Natural killer cell (primary cell): ENCODE measurements at regions of chr12 and their contacts with region 1.

Region 1: DNA sequence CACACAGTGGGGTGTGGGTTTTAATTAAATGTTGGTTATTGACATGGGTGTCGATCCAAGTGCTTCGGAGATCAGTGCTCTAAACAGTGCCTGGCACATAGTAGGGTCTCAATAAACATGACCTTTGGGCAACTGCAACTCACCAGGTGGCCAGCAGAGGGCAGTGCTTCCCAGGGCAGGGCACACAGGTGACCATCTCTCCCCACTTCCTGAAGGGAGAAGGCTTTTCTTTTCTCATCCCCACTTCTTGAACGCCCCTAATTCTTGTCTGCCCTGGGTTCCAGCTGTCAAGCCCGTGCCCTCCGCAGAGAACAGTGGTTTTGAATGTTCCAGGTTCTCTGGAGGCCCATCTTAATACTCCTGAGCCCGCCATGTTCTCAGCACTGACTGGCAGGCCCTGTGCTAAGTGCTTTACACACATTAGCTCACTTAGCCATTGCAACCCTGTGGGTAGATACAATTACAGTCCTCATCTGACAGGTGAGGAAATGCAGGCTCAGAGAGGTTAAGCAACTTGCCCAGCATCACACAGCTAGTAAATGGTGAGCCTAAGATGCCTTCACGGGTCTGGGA is 16.3 kb downstream of the RAPGEF3 start:
- DNase-seq: peak; percentile 69 to 82
- ATAC-seq: peak; percentile 56 to 64 (median 57)
- H3K4me3 ChIP-seq: no peak overlapping the region
- H3K4me3 Mint-ChIP-seq: no peak overlapping the region
- H3K27ac ChIP-seq: no peak overlapping the region
- H3K27ac Mint-ChIP-seq: no peak overlapping the region
- H3K4me1 ChIP-seq: peaks cover 41% of the 10 kb centered on the region
- H3K4me1 Mint-ChIP-seq: peaks cover 17 to 38% of the 10 kb centered on the region in 2 donors
- H3K27me3 ChIP-seq: peaks cover 6% of the 10 kb centered on the region
- H3K27me3 Mint-ChIP-seq: peaks cover 18 to 19% of the 10 kb centered on the region in 2 donors
- CTCF ChIP-seq: peak; percentile 98

Region 2: DNA sequence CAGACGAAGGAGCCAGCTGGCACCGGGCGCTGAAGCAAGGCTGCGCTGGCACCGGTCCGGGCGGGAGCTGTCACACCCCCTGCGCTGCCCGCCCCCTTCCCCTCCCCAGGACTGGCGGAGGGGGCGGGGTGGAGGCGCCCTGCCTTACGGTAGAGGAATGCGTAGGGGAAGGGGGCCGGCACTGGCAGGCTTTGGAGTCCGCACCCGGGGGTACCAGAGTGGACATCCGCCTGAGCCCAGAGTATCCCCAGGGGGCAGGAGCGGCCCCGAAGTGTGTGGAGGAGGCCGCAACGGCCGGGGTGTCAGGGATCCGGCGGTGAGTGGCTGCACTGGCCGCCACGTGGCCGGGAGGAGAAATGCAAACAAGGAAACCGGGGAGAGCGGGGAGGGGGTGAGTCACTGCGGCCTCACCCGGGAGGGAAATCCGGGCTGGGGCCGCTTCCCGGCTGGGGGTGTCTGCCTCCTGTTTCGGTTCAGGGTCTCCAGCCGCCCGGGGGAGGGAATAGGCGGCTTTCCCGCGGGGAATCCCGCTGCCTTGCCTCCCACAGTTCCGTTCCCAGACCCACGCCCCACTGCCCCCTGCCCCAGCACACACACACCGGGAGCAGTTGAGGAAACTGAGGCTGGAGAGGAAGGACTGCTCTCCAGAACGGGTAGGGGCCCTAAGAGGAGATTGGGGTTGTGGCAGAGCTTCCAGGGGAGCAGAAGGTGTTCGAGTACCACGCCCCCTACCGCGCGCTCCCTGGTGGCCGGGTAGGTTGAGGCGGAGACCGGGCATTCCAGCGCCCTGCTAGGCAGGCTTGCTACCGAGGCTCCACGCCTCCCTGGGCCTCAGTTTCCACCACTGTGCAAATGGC is 16.7 kb after region 1 on chr12 and contains the start of gene RAPGEF3:
- intact Hi-C with region 1: loop called (anchors 2 kb)
- DNase-seq: peak; percentile 54 to 81
- ATAC-seq: peak; percentile 86 to 91 (median 88)
- H3K4me3 ChIP-seq: peak within 1 kb of the TSS; percentile 60
- H3K4me3 Mint-ChIP-seq: peak within 1 kb of the TSS; percentile 84
- H3K27ac ChIP-seq: no peak within 1 kb of the TSS
- H3K27ac Mint-ChIP-seq: peak within 1 kb of the TSS in 1 of 2 donors; percentile 76
- H3K4me1 ChIP-seq: peaks cover 33% of the 10 kb centered on the region
- H3K4me1 Mint-ChIP-seq: peaks cover 6 to 21% of the 10 kb centered on the region in 2 donors
- H3K27me3 ChIP-seq: no peaks in the 10 kb centered on the region
- H3K27me3 Mint-ChIP-seq: peaks cover 4 to 8% of the 10 kb centered on the region in 2 donors
- CTCF ChIP-seq: peak; percentile 46
- total RNA-seq, gene RAPGEF3: 0.23 to 0.73 (median 0.49) TPM

Region 3: GRCh38 chr12:47779301-47779942 is 37.1 kb after region 1 on chr12:
- intact Hi-C with region 1: loop called (anchors 1 kb)
- DNase-seq: peak; percentile 91 to 94
- ATAC-seq: peak; percentile 92 to 98 (median 92)
- H3K4me3 ChIP-seq: no peak overlapping the region
- H3K4me3 Mint-ChIP-seq: no peak overlapping the region
- H3K27ac ChIP-seq: no peak overlapping the region
- H3K27ac Mint-ChIP-seq: peak overlapping the region; percentile 68 to 70
- H3K4me1 ChIP-seq: peaks cover 31% of the 10 kb centered on the region
- H3K4me1 Mint-ChIP-seq: peaks cover 7 to 33% of the 10 kb centered on the region in 2 donors
- H3K27me3 ChIP-seq: no peaks in the 10 kb centered on the region
- H3K27me3 Mint-ChIP-seq: peaks cover 0 to 4% of the 10 kb centered on the region in 2 donors
- CTCF ChIP-seq: peak; percentile 92

Region 4: DNA sequence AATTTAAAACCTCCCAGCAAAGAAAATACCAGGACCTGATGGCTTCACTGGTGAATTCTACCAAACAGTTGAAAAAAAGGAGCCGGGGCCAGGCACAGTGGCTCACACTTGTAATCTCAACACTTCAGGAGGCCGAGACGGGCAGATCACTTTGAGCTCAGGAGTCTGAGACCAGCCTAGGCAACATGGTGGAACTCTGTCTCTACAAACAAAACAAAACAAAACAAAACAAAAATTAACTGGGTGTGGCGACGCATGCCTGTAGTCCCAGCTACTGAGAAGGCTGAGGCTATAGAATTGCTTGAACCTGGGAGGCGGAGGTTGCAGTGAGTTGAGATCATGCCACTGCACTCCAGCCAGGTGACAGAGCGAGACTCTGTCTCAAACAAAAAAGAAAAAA is 1567.1 kb after region 1 on chr12:
- intact Hi-C with region 1: no loop called
- DNase-seq: no peak
- ATAC-seq: no peak
- H3K4me3 ChIP-seq: no peak overlapping the region
- H3K4me3 Mint-ChIP-seq: no peak overlapping the region
- H3K27ac ChIP-seq: no peak overlapping the region
- H3K27ac Mint-ChIP-seq: no peak overlapping the region
- H3K4me1 ChIP-seq: no peaks in the 10 kb centered on the region
- H3K4me1 Mint-ChIP-seq: no peaks in the 10 kb centered on the region
- H3K27me3 ChIP-seq: peaks cover 3% of the 10 kb centered on the region
- H3K27me3 Mint-ChIP-seq: peaks cover 20 to 32% of the 10 kb centered on the region in 2 donors
- CTCF ChIP-seq: no peak